H1 (cell line): ENCODE measurements at regions of chr17 and their contacts with region 1.

Region 1: GRCh38 chr17:42388381-42389134 is at the start of gene STAT3:
- DNase-seq: peak; percentile 100
- H3K4me3 ChIP-seq: peak within 1 kb of the TSS; percentile 79 to 91 (median 82)
- H3K27ac ChIP-seq: peak within 1 kb of the TSS; percentile 71; the same call in 1 of the 2 replicates
- H3K4me1 ChIP-seq: peaks cover 3 to 14% (median 6%) of the 10 kb centered on the region in 4 experiments
- H3K27me3 ChIP-seq: no peaks in the 10 kb centered on the region
- CTCF ChIP-seq: no peak
- EP300 ChIP-seq: peak; percentile 96 to 100
- POLR2A ChIP-seq: peak; percentile 13 to 72
- RAD21 ChIP-seq: peak in 1 of 2 experiments; percentile 29; a peak in 3 of 4 replicates
- total RNA-seq, gene STAT3: 94.1 and 94.3 TPM in 2 replicates

Region 2: GRCh38 chr17:42329025-42329976 is 59.3 kb before region 1 on chr17:
- CTCF ChIA-PET with region 1: interaction called, 8 read pairs
- POLR2A ChIA-PET with region 1: interaction called, 14 read pairs
- DNase-seq: peak; percentile 74 to 89
- H3K4me3 ChIP-seq: peak overlapping the region in 2 of 4 experiments; percentile 17 to 39; a peak in 4 of 8 replicates
- H3K27ac ChIP-seq: peak overlapping the region; percentile 86
- H3K4me1 ChIP-seq: peaks cover 0 to 20% (median 9%) of the 10 kb centered on the region in 4 experiments; a peak in 5 of 7 replicates
- H3K27me3 ChIP-seq: no peaks in the 10 kb centered on the region
- CTCF ChIP-seq: no peak
- EP300 ChIP-seq: peak in 1 of 2 experiments; percentile 63; a peak in 1 of 3 replicates
- POLR2A ChIP-seq: peak in 1 of 2 experiments; percentile 73; a peak in 2 of 3 replicates
- RAD21 ChIP-seq: no peak

Region 3: GRCh38 chr17:42365136-42365535 is 23.4 kb before region 1 on chr17:
- CTCF ChIA-PET with region 1: interaction called, 5 read pairs
- POLR2A ChIA-PET with region 1: interaction called, 11 read pairs
- DNase-seq: no peak
- H3K4me3 ChIP-seq: no peak overlapping the region
- H3K27ac ChIP-seq: no peak overlapping the region
- H3K4me1 ChIP-seq: peaks cover 4 to 26% (median 19%) of the 10 kb centered on the region in 4 experiments
- H3K27me3 ChIP-seq: no peaks in the 10 kb centered on the region
- CTCF ChIP-seq: no peak
- EP300 ChIP-seq: no peak
- POLR2A ChIP-seq: no peak
- RAD21 ChIP-seq: no peak

Region 4: DNA sequence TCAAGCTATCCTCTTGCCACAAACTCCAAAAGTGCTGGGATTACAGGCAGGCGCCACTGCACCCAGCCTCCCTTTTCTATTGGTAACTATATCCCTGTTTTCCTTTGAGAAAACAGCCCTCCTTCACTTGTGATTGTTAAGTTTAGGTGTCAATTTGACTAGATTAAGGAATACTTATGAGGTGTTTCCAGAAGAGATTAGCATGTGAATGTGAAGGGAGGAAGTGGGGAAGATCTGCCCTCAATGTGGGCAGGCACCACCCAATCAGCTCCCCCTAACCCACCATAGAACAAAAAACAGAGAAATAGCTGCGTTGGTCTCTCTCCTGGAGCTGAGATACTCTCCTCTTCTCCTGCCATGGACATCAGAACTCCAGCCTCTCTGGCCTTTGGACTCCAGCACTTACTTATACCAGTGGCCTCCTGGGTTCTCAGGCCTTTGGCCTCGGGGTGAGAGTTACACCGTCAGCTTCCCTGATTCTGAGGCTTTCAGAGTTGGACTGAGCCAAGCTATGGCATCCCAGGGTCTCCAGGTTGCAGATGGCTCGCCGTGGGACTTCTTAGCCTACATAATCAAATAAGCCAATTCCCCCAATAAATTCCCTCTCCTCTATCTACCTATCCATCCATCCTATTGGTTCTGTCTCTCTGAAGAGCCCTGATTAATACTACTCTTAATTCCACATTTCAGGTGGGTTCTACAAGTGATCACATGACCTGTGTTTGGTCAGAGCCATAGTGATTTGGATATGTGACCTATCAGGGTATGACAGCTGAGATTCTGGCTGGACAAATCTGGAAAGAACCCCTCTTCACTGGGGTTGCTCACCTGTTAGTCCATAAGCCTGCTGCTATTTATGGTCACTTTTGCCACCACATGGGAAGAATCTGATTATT is 11.6 kb after region 1 on chr17:
- CTCF ChIA-PET with region 1: interaction called, 60 read pairs
- POLR2A ChIA-PET with region 1: interaction called, 33 read pairs
- DNase-seq: no peak
- H3K4me3 ChIP-seq: no peak overlapping the region
- H3K27ac ChIP-seq: peak overlapping the region; percentile 21; the same call in 1 of the 2 replicates
- H3K4me1 ChIP-seq: peaks cover 5 to 23% (median 12%) of the 10 kb centered on the region in 4 experiments
- H3K27me3 ChIP-seq: no peaks in the 10 kb centered on the region
- CTCF ChIP-seq: no peak
- EP300 ChIP-seq: no peak
- POLR2A ChIP-seq: no peak
- RAD21 ChIP-seq: no peak

Region 5: GRCh38 chr17:42438600-42439567 is 50.3 kb after region 1 on chr17:
- CTCF ChIA-PET with region 1: no interaction called
- POLR2A ChIA-PET with region 1: no interaction called
- DNase-seq: no peak
- H3K4me3 ChIP-seq: no peak overlapping the region
- H3K27ac ChIP-seq: no peak overlapping the region
- H3K4me1 ChIP-seq: peaks cover 0 to 5% (median 0%) of the 10 kb centered on the region in 4 experiments; a peak in 1 of 7 replicates
- H3K27me3 ChIP-seq: no peaks in the 10 kb centered on the region
- CTCF ChIP-seq: peak; percentile 32 to 47 (median 46)
- EP300 ChIP-seq: no peak
- POLR2A ChIP-seq: no peak
- RAD21 ChIP-seq: peak; percentile 25 to 44; a peak in 3 of 4 replicates

Region 6: DNA sequence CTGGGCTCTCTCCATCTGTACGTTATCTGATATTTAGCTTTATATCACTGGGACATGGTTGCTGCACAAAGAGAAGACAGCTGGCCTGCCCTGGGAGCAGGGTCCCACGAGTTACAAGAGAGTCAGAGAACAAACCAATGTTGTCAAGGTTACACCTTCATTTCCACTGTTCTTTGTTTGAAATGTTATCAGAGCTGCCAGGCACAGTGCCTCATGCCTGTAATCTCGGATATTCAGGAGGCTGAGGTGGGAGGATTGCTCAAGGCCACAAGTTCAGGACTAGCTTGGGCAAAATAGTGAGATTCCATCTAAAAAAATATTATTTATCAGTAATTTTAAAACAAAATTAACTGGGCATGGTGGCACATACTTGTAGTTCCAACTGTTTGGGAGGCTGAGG is 104.8 kb after region 1 on chr17:
- CTCF ChIA-PET with region 1: no interaction called
- POLR2A ChIA-PET with region 1: no interaction called
- DNase-seq: no peak
- H3K4me3 ChIP-seq: no peak overlapping the region
- H3K27ac ChIP-seq: no peak overlapping the region
- H3K4me1 ChIP-seq: no peaks in the 10 kb centered on the region
- H3K27me3 ChIP-seq: no peaks in the 10 kb centered on the region
- CTCF ChIP-seq: no peak
- EP300 ChIP-seq: no peak
- POLR2A ChIP-seq: no peak
- RAD21 ChIP-seq: no peak